Mammary epithelial cell (primary cell): ENCODE measurements at regions of chr21 and their contacts with region 1.

Region 1: GRCh38 chr21:25845729-25846256 is 111.0 kb downstream of the GABPA start:
- DNase-seq: peak; percentile 15
- H3K4me3 ChIP-seq: no peak overlapping the region
- H3K27ac ChIP-seq: no peak overlapping the region
- H3K4me1 ChIP-seq: peaks cover 5% of the 10 kb centered on the region
- H3K27me3 ChIP-seq: no peaks in the 10 kb centered on the region
- CTCF ChIP-seq: no peak

Region 2: GRCh38 chr21:25801217-25802014 is 44.4 kb before region 1 on chr21:
- CTCF ChIA-PET with region 1: no interaction called
- dilution Hi-C with region 1: loop called (anchors 5 kb)
- in situ Hi-C with region 1: no loop called
- intact Hi-C with region 1: no loop called
- DNase-seq: peak; percentile 59
- H3K4me3 ChIP-seq: no peak overlapping the region
- H3K27ac ChIP-seq: no peak overlapping the region
- H3K4me1 ChIP-seq: no peaks in the 10 kb centered on the region
- H3K27me3 ChIP-seq: peaks cover 2% of the 10 kb centered on the region
- CTCF ChIP-seq: peak; percentile 93 to 100

Region 3: GRCh38 chr21:25925936-25926335 is 80.1 kb after region 1 on chr21:
- CTCF ChIA-PET with region 1: no interaction called
- dilution Hi-C with region 1: no loop called
- in situ Hi-C with region 1: no loop called
- intact Hi-C with region 1: no loop called
- DNase-seq: no peak
- H3K4me3 ChIP-seq: no peak overlapping the region
- H3K27ac ChIP-seq: no peak overlapping the region
- H3K4me1 ChIP-seq: peaks cover 14% of the 10 kb centered on the region
- H3K27me3 ChIP-seq: no peaks in the 10 kb centered on the region
- CTCF ChIP-seq: no peak